Lower leg skin (tissue), 4 donors: ENCODE measurements at regions of chr22 and their contacts with region 1.

Region 1: GRCh38 chr22:17149076-17149810 is 9.8 kb downstream of the HDHD5 start:
- DNase-seq: no peak
- H3K4me3 ChIP-seq: no peak overlapping the region
- CTCF ChIP-seq: no peak
- POLR2A ChIP-seq: no peak

Region 2: DNA sequence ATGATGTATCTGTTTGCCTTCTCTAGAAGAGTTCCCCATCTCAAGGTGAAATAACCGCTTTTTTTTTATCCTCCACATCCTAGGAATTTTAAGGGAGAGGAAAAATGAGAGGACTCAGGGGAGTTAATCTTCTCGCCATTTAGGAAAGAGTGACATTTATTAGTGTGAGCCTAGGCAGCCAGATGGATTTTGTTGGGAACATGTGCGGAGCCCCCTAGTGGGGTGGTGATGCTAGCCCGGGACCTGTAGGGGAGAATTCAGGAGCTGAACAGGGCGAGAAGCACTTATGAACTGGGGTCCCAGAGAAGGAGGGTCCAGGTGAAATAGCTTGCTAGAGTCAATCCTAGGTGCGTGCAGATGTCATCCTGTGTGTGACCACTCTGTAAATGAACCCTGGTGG is 53.7 kb before region 1 on chr22:
- intact Hi-C with region 1: loop called (anchors 10 kb)
- DNase-seq: peak in 1 of 2 donors; percentile 18
- H3K4me3 ChIP-seq: no peak overlapping the region
- CTCF ChIP-seq: no peak
- POLR2A ChIP-seq: no peak

Region 3: GRCh38 chr22:17205432-17205831 is 56.2 kb after region 1 on chr22:
- intact Hi-C with region 1: no loop called
- DNase-seq: no peak
- H3K4me3 ChIP-seq: no peak overlapping the region
- CTCF ChIP-seq: no peak
- POLR2A ChIP-seq: no peak